Activated B cell treated with CpG ODN at 0.5 μM for 24 hours (primary cell): ENCODE measurements at regions of chr3 and their contacts with region 1.

Region 1: GRCh38 chr3:149145974-149146373 is 16.5 kb downstream of the HPS3 start:
- DNase-seq: no peak
- ATAC-seq: peak; percentile 87
- H3K4me3 Mint-ChIP-seq: no peak overlapping the region
- H3K27ac Mint-ChIP-seq: no peak overlapping the region
- H3K4me1 Mint-ChIP-seq: peaks cover 32% of the 10 kb centered on the region
- H3K27me3 Mint-ChIP-seq: no peaks in the 10 kb centered on the region
- CTCF ChIP-seq: no peak

Region 2: DNA sequence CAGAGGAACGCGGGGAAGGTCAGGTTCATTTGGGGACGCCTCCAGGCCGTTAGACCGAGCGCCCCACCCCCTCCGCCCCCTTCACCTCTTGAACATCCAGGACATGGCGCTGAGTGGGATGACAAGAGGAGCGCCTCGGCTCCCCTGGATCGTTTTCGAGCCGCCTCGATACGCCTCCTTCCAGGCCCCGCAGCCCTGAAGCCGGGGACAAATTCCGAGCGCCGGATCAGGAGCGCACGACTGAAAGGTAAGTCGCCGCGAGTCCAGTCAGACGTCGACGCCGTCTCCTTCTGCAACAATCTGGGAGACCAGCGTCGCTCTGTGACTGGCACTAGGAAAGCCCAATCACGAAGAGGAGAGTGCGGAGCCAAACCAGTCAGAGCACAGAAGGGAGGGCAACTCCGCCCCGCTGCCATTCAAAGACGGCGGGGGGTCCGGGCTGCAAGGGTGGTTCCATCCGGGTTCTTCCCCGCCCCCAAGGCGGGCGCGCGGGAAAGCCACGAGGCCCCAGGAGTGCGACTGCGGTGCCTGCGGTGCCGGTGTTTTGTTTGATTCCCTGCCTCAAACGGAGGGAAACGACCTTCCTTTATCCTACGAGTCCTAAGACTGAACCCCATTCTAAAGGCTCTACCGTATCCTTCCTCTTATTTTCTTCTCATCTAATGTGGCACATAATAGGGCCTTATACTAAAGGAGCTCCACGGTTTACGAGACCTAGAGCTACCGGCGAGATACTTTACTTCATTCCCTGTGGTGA is 59.6 kb before region 1 on chr3 and contains the start of gene HLTF:
- CTCF ChIA-PET with region 1: no interaction called
- POLR2A ChIA-PET with region 1: no interaction called
- intact Hi-C with region 1: loop called (anchors 5 kb)
- DNase-seq: peak; percentile 80
- ATAC-seq: peak; percentile 99
- H3K4me3 Mint-ChIP-seq: peak within 1 kb of the TSS; percentile 99
- H3K27ac Mint-ChIP-seq: peak within 1 kb of the TSS; percentile 87
- H3K4me1 Mint-ChIP-seq: peaks cover 32% of the 10 kb centered on the region
- H3K27me3 Mint-ChIP-seq: no peaks in the 10 kb centered on the region
- CTCF ChIP-seq: no peak
- total RNA-seq, gene HLTF: 16.4 and 18.3 TPM in 2 replicates